AG04450 (cell line): ENCODE measurements at regions of chr13 and their contacts with region 1.

Region 1: DNA sequence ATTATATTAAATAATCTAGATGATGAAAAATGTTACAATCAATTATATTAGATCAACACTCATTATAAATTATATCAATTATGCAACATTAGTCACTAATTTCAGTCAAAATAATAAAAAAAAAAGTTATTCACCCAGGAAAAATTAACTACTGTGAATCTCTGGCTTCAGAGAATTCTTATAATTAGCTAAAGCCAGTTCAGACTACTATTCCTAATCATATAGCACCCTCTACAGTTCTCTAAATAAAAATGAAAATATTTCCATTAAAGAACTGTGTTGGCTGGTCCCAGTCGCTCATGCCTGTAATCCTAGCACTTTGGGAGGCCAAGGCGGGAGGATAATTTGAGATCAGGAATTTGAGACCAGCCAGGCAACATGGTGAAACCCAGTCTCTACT is 33.0 kb downstream of the XPO4 start:
- DNase-seq: no peak
- H3K4me3 ChIP-seq: no peak overlapping the region
- H3K27ac ChIP-seq: no peak overlapping the region
- H3K27me3 ChIP-seq: no peaks in the 10 kb centered on the region
- CTCF ChIP-seq: peak; percentile 40

Region 2: GRCh38 chr13:20182231-20182846 is 687.2 kb before region 1 on chr13:
- CTCF ChIA-PET with region 1: interaction called, 11 read pairs
- POLR2A ChIA-PET with region 1: no interaction called
- DNase-seq: peak; percentile 67
- H3K4me3 ChIP-seq: no peak overlapping the region
- H3K27ac ChIP-seq: no peak overlapping the region
- H3K27me3 ChIP-seq: peaks cover 21% of the 10 kb centered on the region
- CTCF ChIP-seq: peak; percentile 91

Region 3: DNA sequence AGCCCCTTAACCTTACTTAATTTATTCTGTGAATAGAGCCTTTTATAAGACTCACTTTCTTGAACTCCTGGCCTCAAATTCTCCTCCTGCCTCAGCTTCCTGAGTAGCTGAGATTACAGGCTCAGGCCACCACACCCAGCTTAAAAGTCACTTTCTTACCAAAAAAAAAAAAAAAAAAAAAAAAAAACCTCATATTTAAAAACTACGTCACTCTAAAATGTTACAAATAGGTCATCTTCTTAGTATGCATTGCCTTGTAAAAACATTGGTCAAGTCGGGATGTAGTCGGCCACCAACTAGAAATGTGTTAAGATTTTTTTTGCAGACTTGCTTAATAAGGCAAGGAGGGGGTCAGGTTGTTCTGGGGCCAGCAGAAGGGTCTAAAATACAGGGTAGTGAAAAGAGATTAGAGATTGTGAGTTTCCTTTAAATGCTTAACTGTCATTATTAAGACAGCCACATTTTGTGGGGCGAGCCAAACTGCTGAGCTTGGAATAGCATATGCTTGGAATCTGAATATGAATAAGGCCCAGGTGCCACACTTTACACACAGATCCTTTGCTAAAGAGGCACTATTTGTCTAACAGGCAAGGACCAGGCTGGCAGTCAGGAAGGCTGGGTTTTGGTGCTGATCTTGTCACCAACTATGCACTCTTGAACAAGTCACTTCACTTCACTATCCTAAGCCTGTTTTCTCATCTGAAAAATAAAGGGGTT is 182.5 kb before region 1 on chr13:
- CTCF ChIA-PET with region 1: no interaction called
- POLR2A ChIA-PET with region 1: no interaction called
- DNase-seq: no peak
- H3K4me3 ChIP-seq: no peak overlapping the region
- H3K27ac ChIP-seq: no peak overlapping the region
- H3K27me3 ChIP-seq: no peaks in the 10 kb centered on the region
- CTCF ChIP-seq: no peak